ENCODE measurements at regions of chr2 and their contacts with region 1.

Region 1: GRCh38 chr2:195656859-195657633 is at the start of gene SLC39A10:
- DNase-seq: peak; percentile 97
- ATAC-seq: peak; percentile 83
- H3K4me3 Mint-ChIP-seq: peak within 1 kb of the TSS; percentile 98
- H3K27ac Mint-ChIP-seq: peak within 1 kb of the TSS; percentile 100
- H3K4me1 Mint-ChIP-seq: peaks cover 22% of the 10 kb centered on the region
- H3K27me3 Mint-ChIP-seq: no peaks in the 10 kb centered on the region
- total RNA-seq, gene SLC39A10: 54.4 to 60.4 TPM

Region 2: DNA sequence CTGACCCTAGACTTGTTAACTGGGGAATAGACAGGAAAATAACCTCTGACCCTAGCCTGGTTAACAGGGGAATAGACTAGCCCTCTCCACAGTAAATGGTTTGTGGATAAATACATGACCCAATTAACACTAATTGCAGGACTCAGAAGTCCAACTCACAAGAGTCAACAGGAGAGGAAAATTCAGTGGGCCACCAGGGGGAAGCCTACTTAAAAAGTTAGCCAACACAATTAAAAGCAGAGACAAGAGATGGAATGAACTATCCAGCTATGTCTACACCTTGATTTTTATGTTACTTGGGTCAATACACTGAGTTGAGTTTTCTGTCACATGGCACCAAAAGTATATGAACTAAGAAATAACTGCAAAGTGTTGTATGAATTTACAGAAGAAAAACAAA is 158.9 kb before region 1 on chr2:
- POLR2A ChIA-PET with region 1: interaction called, 10 read pairs
- DNase-seq: no peak
- ATAC-seq: no peak
- H3K4me3 Mint-ChIP-seq: no peak overlapping the region
- H3K27ac Mint-ChIP-seq: peak overlapping the region; percentile 33
- H3K4me1 Mint-ChIP-seq: peaks cover 31% of the 10 kb centered on the region
- H3K27me3 Mint-ChIP-seq: peaks cover 2% of the 10 kb centered on the region

Region 3: DNA sequence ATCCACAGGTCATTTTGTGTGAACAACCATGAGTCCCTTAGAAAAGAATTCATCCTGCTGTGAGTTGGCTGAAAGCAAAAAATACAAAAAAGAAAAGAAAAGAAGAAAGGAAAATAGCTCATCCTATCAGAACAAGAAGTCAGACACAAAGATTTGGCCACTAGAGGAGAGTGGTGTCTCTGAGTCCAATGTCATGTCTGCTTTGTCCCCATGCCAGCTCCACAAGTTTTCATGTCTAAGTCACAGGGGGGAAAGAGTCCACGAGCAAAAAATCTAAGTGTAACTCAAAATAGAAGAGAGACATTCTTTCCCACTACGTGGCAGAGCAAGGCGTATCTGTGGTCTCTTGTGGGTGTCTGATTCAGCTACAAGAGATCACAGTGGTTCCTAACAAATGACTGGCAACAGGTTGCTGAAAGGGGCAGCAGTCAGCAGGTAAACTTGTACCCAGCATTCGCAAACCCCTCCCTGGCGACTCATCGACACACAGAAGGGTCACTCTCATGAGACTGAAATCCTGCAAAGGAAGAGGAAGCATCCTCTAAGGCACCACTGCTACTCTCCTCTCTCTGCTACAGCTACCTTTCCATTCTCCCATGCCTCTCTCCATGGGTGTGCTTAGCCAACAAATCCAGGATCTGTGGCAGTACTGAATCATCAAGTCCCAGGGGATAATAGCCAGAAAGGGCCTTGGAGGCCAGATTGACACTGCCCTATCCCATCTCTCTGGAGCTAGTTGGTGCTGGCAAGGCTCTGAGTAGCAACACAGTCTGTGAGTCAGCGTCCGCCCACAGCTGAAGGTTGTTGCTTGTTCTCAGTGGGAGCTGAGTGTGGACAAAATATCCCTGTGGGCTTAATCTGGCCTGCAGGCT is 123.0 kb before region 1 on chr2:
- POLR2A ChIA-PET with region 1: interaction called, 346 read pairs
- DNase-seq: peak; percentile 57
- ATAC-seq: peak; percentile 57
- H3K4me3 Mint-ChIP-seq: peak overlapping the region; percentile 85
- H3K27ac Mint-ChIP-seq: peak overlapping the region; percentile 95
- H3K4me1 Mint-ChIP-seq: peaks cover 72% of the 10 kb centered on the region
- H3K27me3 Mint-ChIP-seq: no peaks in the 10 kb centered on the region

Region 4: GRCh38 chr2:195559431-195559914 is 97.6 kb before region 1 on chr2:
- POLR2A ChIA-PET with region 1: interaction called, 100 read pairs
- DNase-seq: peak; percentile 55
- ATAC-seq: peak; percentile 95
- H3K4me3 Mint-ChIP-seq: peak overlapping the region; percentile 60
- H3K27ac Mint-ChIP-seq: peak overlapping the region; percentile 85
- H3K4me1 Mint-ChIP-seq: peaks cover 59% of the 10 kb centered on the region
- H3K27me3 Mint-ChIP-seq: no peaks in the 10 kb centered on the region

Region 5: DNA sequence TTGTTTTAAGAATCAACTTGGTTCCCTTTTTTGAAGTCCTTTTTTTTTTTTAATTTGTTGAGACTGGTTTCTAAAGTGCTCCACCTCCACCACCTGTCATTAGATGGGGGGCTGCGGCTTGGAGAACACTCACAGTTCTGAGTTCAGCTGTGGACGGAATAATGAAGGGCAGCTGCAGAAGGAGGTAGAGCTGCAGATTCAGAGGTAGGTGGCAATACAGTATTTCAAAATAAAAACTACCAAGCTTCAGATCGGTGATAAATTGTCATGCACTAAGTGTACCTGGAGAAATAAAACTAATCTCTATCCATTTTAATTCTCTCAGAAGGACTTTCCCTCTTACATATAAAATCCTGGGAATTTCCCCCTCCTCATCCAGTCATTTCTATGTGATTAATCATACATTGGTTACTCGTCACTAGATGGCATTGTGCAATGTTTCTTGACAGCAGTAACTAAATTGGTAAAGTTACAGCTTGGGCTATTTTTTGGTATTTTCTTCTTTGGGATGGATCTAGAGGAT is 81.1 kb before region 1 on chr2:
- POLR2A ChIA-PET with region 1: interaction called, 35 read pairs
- DNase-seq: no peak
- ATAC-seq: peak; percentile 73
- H3K4me3 Mint-ChIP-seq: peak overlapping the region; percentile 63
- H3K27ac Mint-ChIP-seq: peak overlapping the region; percentile 84
- H3K4me1 Mint-ChIP-seq: peaks cover 50% of the 10 kb centered on the region
- H3K27me3 Mint-ChIP-seq: no peaks in the 10 kb centered on the region

Region 6: DNA sequence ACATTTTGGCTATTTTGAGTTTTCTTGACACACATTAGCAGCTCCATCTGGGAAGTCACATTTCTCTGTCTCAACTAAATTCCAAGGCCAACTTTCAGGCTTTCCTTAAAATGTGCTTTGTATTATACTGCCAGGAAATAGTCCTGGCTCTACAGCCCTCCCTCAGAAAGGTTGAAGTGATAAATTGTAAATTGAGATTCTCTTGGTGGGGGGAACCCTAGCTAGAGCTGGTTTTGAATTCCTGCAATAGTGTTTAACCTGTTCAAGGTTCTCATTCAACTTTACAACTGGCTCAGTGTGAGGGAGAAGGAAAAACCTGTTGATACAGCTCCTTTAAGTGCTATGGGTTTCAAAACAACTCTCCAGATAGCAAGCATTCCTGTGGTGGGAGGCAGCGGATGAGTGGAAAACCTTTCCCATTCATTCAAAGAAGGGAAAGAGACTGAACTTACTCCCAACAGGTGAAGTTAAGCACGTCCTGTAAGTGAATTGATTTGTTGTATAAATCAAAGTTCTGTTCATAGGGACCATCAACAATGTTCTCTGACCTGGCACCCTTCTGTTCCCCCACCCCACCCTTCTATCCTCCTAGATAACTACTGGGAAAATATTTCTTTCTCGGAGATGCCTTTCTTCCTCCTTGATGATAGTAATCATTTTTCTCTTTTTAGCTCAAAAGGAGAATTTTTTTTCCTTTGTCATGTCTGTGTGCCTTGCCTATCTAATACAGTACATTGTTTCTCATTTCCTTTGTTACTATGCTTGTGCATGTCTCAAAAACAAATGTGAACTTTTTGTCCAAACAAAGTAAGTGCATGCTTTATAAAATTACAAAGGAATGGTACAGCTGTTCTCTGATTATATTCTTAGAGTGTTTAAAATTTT is 44.2 kb before region 1 on chr2:
- POLR2A ChIA-PET with region 1: no interaction called
- DNase-seq: no peak
- ATAC-seq: no peak
- H3K4me3 Mint-ChIP-seq: no peak overlapping the region
- H3K27ac Mint-ChIP-seq: no peak overlapping the region
- H3K4me1 Mint-ChIP-seq: peaks cover 4% of the 10 kb centered on the region
- H3K27me3 Mint-ChIP-seq: no peaks in the 10 kb centered on the region

Region 7: DNA sequence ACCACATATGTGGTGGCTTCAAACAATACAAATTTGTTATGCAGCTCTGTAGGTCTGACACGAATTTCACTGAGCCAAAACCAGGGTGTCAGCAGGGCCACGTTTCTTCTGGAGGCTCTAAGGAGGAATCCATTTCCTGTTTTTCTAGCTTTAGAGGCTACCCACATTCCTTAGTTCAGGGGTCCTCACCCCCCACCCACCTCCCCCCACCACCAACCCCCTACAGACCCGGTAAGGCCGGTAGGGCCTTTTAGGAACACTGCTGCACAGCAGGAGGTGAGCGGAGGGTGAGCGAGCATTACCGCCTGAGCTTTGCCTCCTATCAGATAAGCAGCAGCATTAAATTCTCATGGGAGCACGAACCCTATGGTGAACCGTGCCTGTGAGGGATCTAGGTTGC is 10.6 kb before region 1 on chr2:
- POLR2A ChIA-PET with region 1: interaction called, 11 read pairs
- DNase-seq: no peak
- ATAC-seq: no peak
- H3K4me3 Mint-ChIP-seq: no peak overlapping the region
- H3K27ac Mint-ChIP-seq: no peak overlapping the region
- H3K4me1 Mint-ChIP-seq: peaks cover 28% of the 10 kb centered on the region
- H3K27me3 Mint-ChIP-seq: no peaks in the 10 kb centered on the region

Region 8: DNA sequence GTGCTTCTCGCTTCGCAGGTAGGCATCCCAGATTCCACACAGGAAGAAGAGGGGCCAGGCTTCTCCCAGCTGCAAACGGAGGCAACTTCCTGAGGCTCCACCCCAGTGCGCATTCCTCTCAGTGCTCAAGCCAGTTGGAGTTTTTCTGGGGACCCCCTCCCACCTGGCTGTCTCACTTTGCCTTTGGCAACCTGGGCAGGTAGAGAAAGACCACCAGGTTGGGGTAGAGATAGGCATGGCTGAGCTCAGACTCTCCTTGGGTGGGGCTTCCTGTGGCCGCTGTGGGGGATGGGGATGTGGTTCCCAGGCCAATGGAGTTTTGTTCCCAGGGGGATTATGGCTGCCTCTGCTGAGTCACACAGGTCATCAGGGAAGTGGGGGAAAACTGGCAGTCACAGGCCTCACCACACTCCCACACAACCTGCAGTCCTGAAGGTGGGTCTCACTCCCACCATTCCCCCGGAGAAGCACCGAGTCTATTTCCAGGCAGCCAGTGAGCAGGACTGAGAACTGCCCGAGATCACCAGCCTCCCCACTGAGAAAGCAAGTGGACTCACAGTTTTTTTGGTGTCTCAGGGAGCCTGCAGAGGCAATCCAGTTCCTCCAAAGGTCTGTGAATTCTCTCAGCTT is 38.1 kb after region 1 on chr2:
- POLR2A ChIA-PET with region 1: no interaction called
- DNase-seq: no peak
- ATAC-seq: no peak
- H3K4me3 Mint-ChIP-seq: no peak overlapping the region
- H3K27ac Mint-ChIP-seq: no peak overlapping the region
- H3K4me1 Mint-ChIP-seq: peaks cover 15% of the 10 kb centered on the region
- H3K27me3 Mint-ChIP-seq: no peaks in the 10 kb centered on the region

Region 9: DNA sequence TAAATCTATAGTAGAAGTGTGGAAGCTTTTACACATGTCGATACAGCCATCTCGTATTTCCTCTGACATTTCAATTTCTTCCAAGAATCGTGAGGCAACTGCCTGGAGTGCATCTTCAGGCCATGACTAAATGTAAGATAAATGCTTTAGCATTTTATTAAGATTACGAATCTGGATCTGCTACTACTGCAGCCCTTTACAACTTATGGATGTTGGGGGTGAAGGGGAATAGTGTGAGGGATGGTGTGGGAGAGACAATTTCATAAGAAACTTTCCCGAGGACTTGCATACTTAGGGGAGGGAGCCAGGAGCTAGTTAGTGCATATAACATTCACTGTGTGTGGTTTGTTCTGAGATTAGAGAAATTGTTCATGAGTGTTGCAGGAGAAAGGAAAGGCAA is 204.8 kb after region 1 on chr2:
- POLR2A ChIA-PET with region 1: no interaction called
- DNase-seq: no peak
- ATAC-seq: no peak
- H3K4me3 Mint-ChIP-seq: no peak overlapping the region
- H3K27ac Mint-ChIP-seq: no peak overlapping the region
- H3K4me1 Mint-ChIP-seq: peaks cover 4% of the 10 kb centered on the region
- H3K27me3 Mint-ChIP-seq: peaks cover 1% of the 10 kb centered on the region